ENCODE measurements at regions of chr2 and their contacts with region 1.

Region 1: DNA sequence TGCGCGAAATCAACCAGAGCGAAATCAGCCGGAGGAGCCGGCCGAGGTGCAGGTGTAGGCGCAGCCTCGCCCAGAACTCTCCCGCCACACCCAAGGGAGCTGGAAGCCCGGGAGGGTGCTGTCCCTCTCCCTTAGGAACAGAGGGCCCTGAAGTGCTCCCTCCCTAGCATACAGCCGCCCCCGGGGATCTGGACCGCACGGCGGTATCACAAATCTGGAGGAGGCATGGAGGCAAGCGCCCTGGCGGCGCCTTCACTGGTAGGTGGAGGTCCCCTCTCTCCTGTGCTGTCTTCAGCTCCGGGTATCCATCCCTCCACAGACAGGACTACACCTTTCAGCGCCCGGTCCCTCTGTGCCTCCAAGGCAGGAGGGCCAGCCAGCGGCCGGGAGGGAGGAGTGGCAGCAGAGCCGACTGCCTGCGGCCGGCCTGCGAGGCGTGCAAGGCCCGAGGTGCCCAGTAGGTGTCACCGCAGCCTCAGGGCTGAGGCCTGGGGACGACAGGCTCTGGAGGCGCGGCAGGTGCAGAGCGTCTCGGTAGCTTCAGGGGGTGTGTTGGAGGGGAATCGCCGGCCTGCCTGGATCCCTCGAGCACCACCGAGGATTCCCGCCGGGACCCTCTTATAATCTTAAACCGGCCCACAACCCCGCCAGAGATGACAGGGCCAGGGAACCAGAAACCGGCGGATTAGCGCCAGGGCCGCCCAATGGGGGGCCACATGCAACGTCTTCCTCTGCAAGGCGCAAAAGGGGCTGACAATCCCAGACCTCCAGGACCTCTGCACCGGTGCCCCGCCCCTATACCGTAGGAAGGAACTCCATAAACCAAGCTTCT is 2.8 kb downstream of the IHH start:
- DNase-seq: peak; percentile 62
- ATAC-seq: peak; percentile 78
- H3K4me3 ChIP-seq: peak overlapping the region; percentile 29 to 70 (median 50); a peak in 4 of 6 replicates
- H3K27ac ChIP-seq: no peak overlapping the region
- H3K4me1 ChIP-seq: peaks cover 23% of the 10 kb centered on the region
- H3K27me3 ChIP-seq: peaks cover 14 to 41% of the 10 kb centered on the region in 2 experiments; a peak in 4 of 5 replicates
- CTCF ChIP-seq: peak; percentile 100
- EP300 ChIP-seq: no peak
- POLR2A ChIP-seq: no peak
- RAD21 ChIP-seq: peak; percentile 100

Region 2: DNA sequence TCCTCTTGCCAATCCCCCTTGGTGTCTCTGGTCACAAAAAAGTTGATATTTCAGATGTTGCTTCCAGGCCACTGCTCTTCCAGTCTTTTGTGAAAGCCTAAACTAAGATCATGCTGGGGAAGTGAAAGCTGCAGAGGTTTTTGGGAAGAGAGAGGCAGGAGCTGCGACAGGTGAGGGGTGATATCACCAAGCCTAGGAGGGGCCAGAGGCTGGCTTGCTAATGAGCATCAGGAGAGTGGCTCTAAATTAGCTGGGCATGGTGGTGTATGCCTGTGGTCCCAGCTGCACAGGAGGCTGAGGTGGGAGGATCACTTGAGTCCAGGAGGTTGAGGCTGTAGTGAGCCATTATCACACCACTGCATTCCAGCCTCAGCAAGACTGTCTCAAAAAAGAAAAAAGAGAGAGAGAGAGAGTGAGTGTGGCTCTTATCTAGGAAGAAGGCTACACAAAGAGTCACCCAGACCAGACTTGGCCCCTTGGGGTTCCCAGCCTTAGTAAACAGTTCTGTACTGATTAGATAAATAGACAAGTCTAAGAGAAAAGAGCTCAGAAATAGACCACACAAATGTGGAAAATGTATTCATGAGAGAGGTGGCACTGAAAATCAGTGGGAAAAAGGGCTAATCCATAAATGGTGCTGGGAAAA is 113.0 kb before region 1 on chr2:
- CTCF ChIA-PET with region 1: no interaction called
- POLR2A ChIA-PET with region 1: no interaction called
- in situ Hi-C with region 1: no loop called
- intact Hi-C with region 1: no loop called
- DNase-seq: no peak
- ATAC-seq: no peak
- H3K4me3 ChIP-seq: no peak overlapping the region
- H3K27ac ChIP-seq: no peak overlapping the region
- H3K4me1 ChIP-seq: no peaks in the 10 kb centered on the region
- H3K27me3 ChIP-seq: peaks cover 1 to 46% of the 10 kb centered on the region in 2 experiments; a peak in 4 of 5 replicates
- CTCF ChIP-seq: no peak
- EP300 ChIP-seq: no peak
- POLR2A ChIP-seq: no peak
- RAD21 ChIP-seq: no peak

Region 3: DNA sequence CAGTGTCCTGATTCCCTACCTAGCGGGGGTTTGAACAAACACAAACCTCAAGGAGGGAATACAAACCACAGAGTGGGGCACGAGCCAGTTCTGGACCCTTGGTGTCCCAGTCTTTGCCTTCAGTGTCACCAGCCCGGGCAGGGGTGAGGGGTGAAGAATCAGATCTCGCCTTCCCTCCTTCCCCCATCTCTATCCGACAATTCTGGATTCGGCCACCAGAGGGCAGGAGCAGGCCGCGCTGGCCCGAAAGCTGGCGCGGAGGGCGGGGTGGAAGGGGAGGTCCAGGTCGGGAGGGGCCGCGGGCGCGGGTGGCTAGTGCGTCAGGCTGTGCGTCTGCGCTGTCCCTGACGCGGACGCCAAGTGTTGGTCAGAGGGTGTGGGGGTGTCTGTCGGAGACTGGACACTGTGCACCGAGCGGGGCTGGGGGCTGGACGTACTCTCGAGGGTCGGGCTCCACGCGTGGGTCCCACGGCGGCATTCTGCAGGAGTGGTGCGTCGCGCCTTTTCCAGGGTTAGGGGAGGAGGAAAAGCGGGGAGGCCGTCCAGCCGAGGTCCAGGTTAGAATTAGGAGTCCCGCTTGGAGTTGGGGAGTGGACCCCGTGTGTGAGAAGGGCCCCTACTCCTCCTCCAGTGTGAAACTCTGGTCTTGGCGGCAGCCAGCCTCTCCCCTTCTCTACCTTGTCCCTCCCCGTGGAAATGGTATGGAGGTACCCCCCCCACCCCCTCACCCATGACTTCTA is 61.8 kb before region 1 on chr2:
- CTCF ChIA-PET with region 1: interaction called, 4 read pairs
- POLR2A ChIA-PET with region 1: no interaction called
- in situ Hi-C with region 1: no loop called
- intact Hi-C with region 1: loop called (anchors 1 kb)
- DNase-seq: peak; percentile 58
- ATAC-seq: peak; percentile 59
- H3K4me3 ChIP-seq: peak overlapping the region in 1 of 3 experiments; percentile 64; a peak in 1 of 6 replicates
- H3K27ac ChIP-seq: no peak overlapping the region
- H3K4me1 ChIP-seq: peaks cover 21% of the 10 kb centered on the region
- H3K27me3 ChIP-seq: peaks cover 52 to 96% of the 10 kb centered on the region in 2 experiments
- CTCF ChIP-seq: peak; percentile 98
- EP300 ChIP-seq: no peak
- POLR2A ChIP-seq: no peak
- RAD21 ChIP-seq: peak; percentile 79

Region 4: DNA sequence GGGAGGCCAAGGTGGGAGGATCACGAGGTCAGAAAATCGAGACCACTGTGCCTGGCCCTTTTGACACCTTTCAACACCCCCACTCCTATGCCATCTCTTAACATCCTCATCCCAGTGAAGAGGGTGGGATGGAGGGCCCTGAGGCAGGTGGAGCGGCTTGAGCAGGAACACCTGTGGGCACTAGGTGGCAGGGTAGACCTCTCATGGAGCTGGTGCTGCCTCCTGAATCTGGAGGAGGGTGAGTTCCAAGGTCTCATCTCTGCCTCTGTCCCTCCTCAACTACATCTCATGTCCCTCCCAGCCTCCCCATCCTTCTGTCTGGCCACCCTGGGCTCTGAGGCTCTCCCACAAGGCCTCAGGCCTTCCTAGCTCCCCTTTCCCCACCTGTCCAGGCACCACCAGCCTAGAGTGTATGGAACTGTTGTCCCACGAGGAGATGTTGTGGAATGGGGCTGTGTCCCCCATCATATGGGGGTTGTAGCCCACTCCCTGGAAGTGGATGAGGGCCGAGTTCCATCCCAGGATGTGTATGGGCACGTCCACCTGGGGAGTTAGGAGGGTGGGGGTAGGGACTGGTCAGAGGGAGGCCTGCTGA is 47.7 kb before region 1 on chr2:
- CTCF ChIA-PET with region 1: no interaction called
- POLR2A ChIA-PET with region 1: no interaction called
- in situ Hi-C with region 1: no loop called
- intact Hi-C with region 1: no loop called
- DNase-seq: peak; percentile 37
- ATAC-seq: peak; percentile 95
- H3K4me3 ChIP-seq: no peak overlapping the region
- H3K27ac ChIP-seq: no peak overlapping the region
- H3K4me1 ChIP-seq: peaks cover 7% of the 10 kb centered on the region; the same call in 1 of the 2 replicates
- H3K27me3 ChIP-seq: peaks cover 16 to 51% of the 10 kb centered on the region in 2 experiments
- CTCF ChIP-seq: peak; percentile 84
- EP300 ChIP-seq: no peak
- POLR2A ChIP-seq: no peak
- RAD21 ChIP-seq: 0 out of 2 replicates have a peak, but pooled peaks have one; percentile 59

Region 5: GRCh38 chr2:219104107-219105035 is 46.4 kb after region 1 on chr2:
- CTCF ChIA-PET with region 1: interaction called, 7 read pairs
- POLR2A ChIA-PET with region 1: no interaction called
- in situ Hi-C with region 1: no loop called
- intact Hi-C with region 1: loop called (anchors 1 kb)
- DNase-seq: peak; percentile 66
- ATAC-seq: peak; percentile 97
- H3K4me3 ChIP-seq: no peak overlapping the region
- H3K27ac ChIP-seq: no peak overlapping the region
- H3K4me1 ChIP-seq: peaks cover 38% of the 10 kb centered on the region
- H3K27me3 ChIP-seq: no peaks in the 10 kb centered on the region
- CTCF ChIP-seq: peak; percentile 84
- EP300 ChIP-seq: no peak
- POLR2A ChIP-seq: no peak
- RAD21 ChIP-seq: peak; percentile 78

Region 6: DNA sequence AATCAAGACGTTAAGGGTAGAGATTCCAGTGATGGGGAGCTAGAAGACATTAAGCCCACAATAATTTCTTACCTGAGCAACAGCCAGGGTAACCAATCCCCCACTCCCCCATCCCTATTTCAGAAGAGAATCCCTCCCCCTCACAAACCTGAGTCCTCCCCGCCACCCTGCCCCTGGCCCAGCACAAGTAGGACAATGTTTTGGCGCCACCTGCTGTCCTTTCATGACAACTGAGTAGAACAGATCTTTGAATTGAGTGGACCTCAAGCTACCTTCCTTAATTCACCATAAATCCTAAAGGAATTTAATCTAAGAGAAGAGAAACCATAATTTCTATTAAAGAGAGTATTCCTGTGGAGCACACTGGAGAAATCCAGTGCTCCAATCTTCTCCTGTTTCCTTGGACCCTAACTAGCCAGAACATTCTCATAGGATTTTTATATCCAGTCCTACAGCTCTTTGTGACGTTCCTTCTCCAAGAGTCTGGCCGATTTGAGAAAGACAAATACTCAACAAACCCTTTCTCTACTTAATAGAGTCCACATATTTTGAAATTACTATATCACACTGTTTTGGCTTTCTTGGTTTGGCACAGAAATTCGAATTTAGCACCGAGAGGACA is 61.6 kb after region 1 on chr2:
- CTCF ChIA-PET with region 1: interaction called, 82 read pairs
- POLR2A ChIA-PET with region 1: interaction called, 22 read pairs
- in situ Hi-C with region 1: loop called (anchors 5 kb)
- intact Hi-C with region 1: loop called (anchors 1 kb)
- DNase-seq: peak; percentile 62
- ATAC-seq: peak; percentile 61
- H3K4me3 ChIP-seq: no peak overlapping the region
- H3K27ac ChIP-seq: no peak overlapping the region
- H3K4me1 ChIP-seq: peaks cover 69% of the 10 kb centered on the region
- H3K27me3 ChIP-seq: no peaks in the 10 kb centered on the region
- CTCF ChIP-seq: peak; percentile 95
- EP300 ChIP-seq: no peak
- POLR2A ChIP-seq: no peak
- RAD21 ChIP-seq: peak; percentile 87

Region 7: DNA sequence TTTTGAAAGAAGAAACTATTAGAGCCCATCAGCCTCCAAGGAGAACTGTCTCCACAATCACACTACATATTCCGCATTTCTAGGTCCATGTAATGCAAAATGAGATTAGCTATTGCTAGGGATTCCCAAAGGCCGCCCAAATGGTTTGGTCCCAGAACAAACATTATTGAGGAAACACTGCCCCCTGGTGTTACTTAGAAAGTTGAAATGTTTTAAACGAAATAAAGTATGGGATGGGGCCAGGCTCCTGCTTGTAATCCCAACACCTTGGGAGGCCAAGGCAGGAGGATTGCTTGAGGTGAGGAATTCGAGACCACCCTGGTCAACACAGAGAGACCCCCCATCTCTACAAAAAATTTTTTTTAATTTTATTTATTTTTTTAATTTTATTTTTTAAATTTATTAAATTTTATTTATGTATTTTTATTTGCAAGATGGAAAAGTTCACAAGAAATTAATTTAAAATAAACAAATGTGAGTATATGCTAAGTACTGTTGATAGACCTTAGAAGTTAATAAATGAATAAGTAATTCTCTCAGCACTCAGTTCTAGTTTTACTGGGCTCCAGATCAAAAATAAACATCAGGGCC is 97.2 kb after region 1 on chr2:
- CTCF ChIA-PET with region 1: interaction called, 56 read pairs
- POLR2A ChIA-PET with region 1: interaction called, 8 read pairs
- in situ Hi-C with region 1: loop called (anchors 5 kb)
- intact Hi-C with region 1: loop called (anchors 1 kb)
- DNase-seq: peak; percentile 83
- ATAC-seq: peak; percentile 63
- H3K4me3 ChIP-seq: no peak overlapping the region
- H3K27ac ChIP-seq: no peak overlapping the region
- H3K4me1 ChIP-seq: peaks cover 6% of the 10 kb centered on the region
- H3K27me3 ChIP-seq: no peaks in the 10 kb centered on the region
- CTCF ChIP-seq: peak; percentile 86
- EP300 ChIP-seq: no peak
- POLR2A ChIP-seq: no peak
- RAD21 ChIP-seq: peak; percentile 91